Naive thymus-derived CD8-positive, alpha-beta T cell (primary cell): ENCODE measurements at regions of chr9 and their contacts with region 1.

Region 1: DNA sequence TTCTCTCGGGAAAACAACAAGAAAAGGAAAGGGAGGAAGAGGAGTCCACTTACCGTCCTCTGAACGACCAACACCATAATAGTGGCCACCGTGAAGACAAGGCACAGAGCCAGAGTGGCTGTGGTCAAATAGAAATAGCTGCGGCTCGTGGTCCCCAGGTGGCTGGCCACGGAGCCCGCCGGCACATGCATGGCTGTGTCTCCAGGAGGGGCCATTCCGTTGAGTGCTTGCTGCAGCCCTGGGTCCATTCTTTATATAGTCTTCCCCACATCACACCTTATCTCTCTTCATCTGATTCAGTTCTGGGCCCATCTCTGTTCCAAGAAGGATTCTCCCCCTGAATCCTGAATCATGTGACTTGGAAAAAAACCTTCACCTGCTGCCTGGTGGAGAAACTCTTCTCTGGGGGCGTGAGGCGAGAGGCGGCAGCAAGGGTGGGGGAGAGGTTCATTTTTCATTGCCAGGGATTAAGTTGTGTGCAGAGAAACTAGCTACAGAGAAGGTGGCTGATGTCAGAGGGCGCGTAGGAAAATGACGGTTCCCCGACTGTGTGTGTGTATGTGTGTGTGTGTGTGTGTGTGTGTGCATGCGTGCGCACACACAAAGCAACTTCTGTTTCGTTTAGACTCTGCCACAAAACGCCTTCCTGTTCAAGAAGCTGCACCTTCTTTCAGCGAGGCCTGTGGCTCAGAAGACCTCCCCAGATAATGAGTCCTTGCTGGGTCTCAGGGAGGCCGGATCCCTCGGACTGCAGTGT is at the start of gene TNFSF8:
- DNase-seq: peak; percentile 43 to 93 (median 77)
- ATAC-seq: peak; percentile 74 to 83
- H3K4me3 Mint-ChIP-seq: peak within 1 kb of the TSS; percentile 83 to 100 (median 97)
- H3K27ac Mint-ChIP-seq: peak within 1 kb of the TSS; percentile 92 to 100 (median 99)
- H3K4me1 Mint-ChIP-seq: peaks cover 31 to 56% (median 52%) of the 10 kb centered on the region in 4 donors
- H3K27me3 Mint-ChIP-seq: no peaks in the 10 kb centered on the region
- polyA plus RNA-seq, gene TNFSF8: 38.4 to 81.3 (median 69.8) TPM

Region 2: DNA sequence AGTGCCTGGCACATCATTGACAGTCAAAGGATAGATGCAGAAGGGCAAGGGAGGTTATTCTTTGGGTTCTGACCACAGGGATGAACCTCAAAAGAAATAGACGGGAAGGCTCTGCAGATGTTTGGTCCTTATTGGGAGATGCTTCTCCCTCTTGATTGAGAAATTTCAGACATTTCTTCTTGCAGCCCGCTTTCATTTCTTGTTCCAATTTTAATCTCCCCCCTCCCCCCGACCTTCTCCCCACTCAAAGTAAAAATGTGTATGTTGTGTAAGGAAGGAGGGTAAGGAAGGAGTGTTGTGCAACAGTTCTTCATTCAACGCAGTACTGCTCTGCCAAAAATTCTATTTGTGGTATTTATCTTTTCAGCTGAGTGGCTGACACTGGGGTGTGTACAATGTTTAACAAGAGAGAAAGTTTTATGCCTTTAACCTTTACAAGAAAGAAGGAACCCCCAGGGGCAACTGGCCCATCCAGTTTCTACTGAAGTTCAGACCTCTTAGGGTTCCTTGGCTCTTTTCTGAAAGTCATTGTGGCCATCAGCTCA is 78.1 kb before region 1 on chr9:
- POLR2A ChIA-PET with region 1: no interaction called
- DNase-seq: no peak
- ATAC-seq: no peak
- H3K4me3 Mint-ChIP-seq: no peak overlapping the region
- H3K27ac Mint-ChIP-seq: peak overlapping the region in 1 of 10 donors; percentile 30
- H3K4me1 Mint-ChIP-seq: peaks cover 5 to 16% (median 9%) of the 10 kb centered on the region in 4 donors
- H3K27me3 Mint-ChIP-seq: no peaks in the 10 kb centered on the region

Region 3: DNA sequence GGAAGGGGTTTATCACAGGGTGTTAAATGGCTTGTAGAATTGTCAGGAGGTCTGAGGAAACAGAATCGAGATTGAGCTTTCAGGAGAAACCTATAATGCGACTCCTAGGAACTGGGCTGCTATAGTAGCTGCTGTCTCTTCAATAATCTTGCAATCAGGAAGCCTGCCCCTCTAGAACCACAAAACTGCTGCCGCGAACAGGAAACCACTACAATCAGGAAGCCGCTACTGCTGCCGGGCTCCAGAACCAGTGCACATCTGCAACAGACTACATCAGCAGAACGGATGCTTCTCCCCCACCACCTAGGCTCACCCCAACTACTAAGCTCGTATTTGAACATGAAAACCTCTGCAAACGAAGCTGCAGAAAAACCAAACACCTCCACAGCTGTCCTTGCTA is 31.5 kb before region 1 on chr9:
- POLR2A ChIA-PET with region 1: interaction called, 24 read pairs
- DNase-seq: peak; percentile 46 to 92 (median 82)
- ATAC-seq: peak; percentile 98 to 99
- H3K4me3 Mint-ChIP-seq: no peak overlapping the region
- H3K27ac Mint-ChIP-seq: no peak overlapping the region
- H3K4me1 Mint-ChIP-seq: peaks cover 23 to 36% (median 24%) of the 10 kb centered on the region in 4 donors
- H3K27me3 Mint-ChIP-seq: no peaks in the 10 kb centered on the region

Region 4: DNA sequence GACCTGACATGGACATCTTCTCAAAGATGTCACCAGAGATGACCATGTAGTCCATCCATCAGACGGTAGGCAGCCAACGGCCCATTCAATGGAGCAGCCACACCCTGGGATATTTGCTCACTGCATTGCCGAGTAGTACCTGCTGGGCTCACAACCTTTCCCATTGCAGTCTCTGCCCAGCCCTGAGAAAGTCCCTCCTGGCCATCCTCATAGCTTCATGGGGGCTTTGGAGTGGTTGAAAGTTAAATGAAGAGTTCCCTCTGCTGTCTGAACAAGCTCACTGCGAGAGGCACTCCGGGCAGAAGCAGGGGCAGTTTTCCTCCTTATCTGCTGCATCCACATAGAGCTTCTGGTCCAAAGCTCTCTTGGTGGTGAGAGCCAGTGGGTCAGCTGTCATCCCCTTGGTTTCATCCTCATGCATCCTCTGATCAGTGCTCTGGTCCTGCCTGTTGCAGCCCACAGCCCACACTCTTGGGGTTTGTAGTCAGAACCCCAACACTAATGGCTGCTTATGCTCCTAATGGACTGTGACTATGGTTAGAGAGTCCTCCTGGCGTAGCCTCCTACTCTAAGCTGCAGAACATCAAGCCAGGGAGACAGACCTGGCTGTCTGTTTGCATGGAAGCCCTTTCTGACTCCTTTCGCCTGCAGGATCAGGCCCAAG is 23.2 kb before region 1 on chr9:
- POLR2A ChIA-PET with region 1: interaction called, 55 read pairs
- DNase-seq: peak in 6 of 10 donors; percentile 8 to 42 (median 32)
- ATAC-seq: peak; percentile 44 to 62
- H3K4me3 Mint-ChIP-seq: peak overlapping the region in 8 of 10 donors; percentile 15 to 77 (median 34)
- H3K27ac Mint-ChIP-seq: peak overlapping the region; percentile 60 to 94 (median 86)
- H3K4me1 Mint-ChIP-seq: peaks cover 39 to 60% (median 53%) of the 10 kb centered on the region in 4 donors
- H3K27me3 Mint-ChIP-seq: no peaks in the 10 kb centered on the region

Region 5: GRCh38 chr9:114919611-114920010 is 10.6 kb before region 1 on chr9:
- POLR2A ChIA-PET with region 1: interaction called, 11 read pairs
- DNase-seq: no peak
- ATAC-seq: no peak
- H3K4me3 Mint-ChIP-seq: peak overlapping the region in 8 of 10 donors; percentile 0 to 43 (median 11)
- H3K27ac Mint-ChIP-seq: peak overlapping the region in 5 of 10 donors; percentile 6 to 61 (median 43)
- H3K4me1 Mint-ChIP-seq: peaks cover 37 to 95% (median 80%) of the 10 kb centered on the region in 4 donors
- H3K27me3 Mint-ChIP-seq: no peaks in the 10 kb centered on the region